Right cardiac atrium (tissue), 5 donors: ENCODE measurements at regions of chr7 and their contacts with region 1.

Region 1: GRCh38 chr7:116984917-116985316 is 31.6 kb downstream of the ST7 start:
- DNase-seq: no peak
- ATAC-seq: peak; percentile 43 to 52
- H3K4me3 ChIP-seq: no peak overlapping the region
- H3K27ac ChIP-seq: no peak overlapping the region
- H3K4me1 ChIP-seq: no peaks in the 10 kb centered on the region
- H3K27me3 ChIP-seq: no peaks in the 10 kb centered on the region

Region 2: DNA sequence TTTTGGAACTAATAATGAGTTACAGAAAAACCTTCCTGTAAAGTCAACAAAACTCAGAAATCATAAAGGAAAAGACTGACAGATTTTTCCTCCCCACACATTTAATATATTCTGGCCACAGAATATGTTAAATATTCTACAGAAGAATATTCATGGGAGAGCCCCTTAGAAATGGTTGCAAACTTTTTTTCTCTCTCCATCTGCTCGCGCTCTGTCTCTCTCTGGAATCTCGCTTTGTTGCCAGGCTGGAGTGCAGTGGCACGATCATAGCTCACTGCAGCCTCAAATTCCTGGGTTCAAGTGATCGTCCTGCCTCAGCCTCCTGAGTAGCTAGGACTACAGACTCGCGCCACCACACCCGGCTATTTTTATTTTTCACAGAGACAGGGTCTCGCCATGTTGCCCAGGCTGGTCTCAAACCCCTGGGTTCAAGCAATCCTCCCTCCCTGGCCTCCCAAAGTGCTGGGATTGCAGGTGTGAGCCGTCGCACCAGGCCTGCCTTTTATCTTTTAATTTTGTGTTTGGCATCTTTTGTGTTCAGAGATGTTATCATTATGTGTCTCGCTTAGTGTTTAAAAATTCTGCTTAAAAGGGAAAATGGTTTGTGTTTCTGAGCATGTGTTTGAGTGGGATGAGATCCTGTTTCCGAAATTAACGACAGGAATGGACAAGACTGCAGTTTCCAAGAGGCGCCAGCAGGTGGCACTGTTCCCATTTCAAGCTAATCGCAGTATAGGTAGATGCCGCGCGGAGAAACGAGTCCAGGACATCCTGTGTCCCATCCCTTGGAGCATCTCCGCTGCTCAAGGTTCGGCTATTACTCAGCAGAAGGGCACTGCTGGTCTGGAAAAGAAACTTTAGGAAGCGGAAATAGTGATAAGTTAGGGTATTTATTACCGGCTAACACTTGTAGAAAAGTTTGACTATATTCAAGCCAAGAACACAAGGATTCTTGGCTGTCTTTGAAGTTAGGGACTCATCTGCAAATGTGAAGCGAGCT is 54.7 kb before region 1 on chr7:
- intact Hi-C with region 1: loop called in 1 of 4 experiments (anchors 10 kb)
- DNase-seq: peak; percentile 82 to 92 (median 89)
- ATAC-seq: peak; percentile 88 to 90
- H3K4me3 ChIP-seq: no peak overlapping the region
- H3K27ac ChIP-seq: no peak overlapping the region
- H3K4me1 ChIP-seq: no peaks in the 10 kb centered on the region
- H3K27me3 ChIP-seq: no peaks in the 10 kb centered on the region

Region 3: GRCh38 chr7:117119192-117119924 is 134.4 kb after region 1 on chr7:
- intact Hi-C with region 1: loop called (anchors 5 to 10 kb)
- DNase-seq: peak; percentile 76 to 91 (median 86)
- ATAC-seq: peak; percentile 51 to 63
- H3K4me3 ChIP-seq: no peak overlapping the region
- H3K27ac ChIP-seq: no peak overlapping the region
- H3K4me1 ChIP-seq: no peaks in the 10 kb centered on the region
- H3K27me3 ChIP-seq: no peaks in the 10 kb centered on the region

Region 4: DNA sequence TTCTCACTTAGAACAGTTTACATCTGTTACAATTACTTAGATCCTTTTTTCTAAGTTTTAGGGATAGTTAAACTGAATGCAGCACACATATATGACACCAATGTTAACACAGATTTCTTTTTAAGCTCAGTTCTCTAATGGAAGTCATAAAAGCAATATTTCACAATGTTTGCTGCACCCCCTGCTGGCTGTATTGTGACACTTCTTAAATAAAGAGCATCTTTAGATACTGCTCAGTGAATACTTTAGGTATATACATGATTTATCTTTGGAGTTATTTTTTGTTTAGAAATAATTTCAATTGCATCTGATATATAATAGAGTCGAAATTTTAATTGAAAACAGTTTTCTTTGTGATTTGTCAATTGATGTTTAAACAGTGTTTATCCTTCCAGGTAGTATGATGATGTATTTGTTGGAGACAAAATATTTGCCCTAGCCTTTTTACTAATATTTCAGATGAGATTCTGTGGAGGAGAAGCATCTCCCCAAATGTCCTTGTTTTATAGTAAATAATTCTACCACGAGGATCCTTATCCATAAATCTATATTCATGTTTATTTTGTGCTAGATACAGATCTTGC is 142.8 kb after region 1 on chr7:
- intact Hi-C with region 1: loop called in 1 of 4 experiments (anchors 10 kb)
- DNase-seq: peak in 2 of 3 donors; percentile 38 to 65
- ATAC-seq: peak; percentile 20 to 38
- H3K4me3 ChIP-seq: no peak overlapping the region
- H3K27ac ChIP-seq: no peak overlapping the region
- H3K4me1 ChIP-seq: no peaks in the 10 kb centered on the region
- H3K27me3 ChIP-seq: no peaks in the 10 kb centered on the region

Region 5: GRCh38 chr7:117193564-117193963 is 208.6 kb after region 1 on chr7:
- intact Hi-C with region 1: no loop called
- DNase-seq: no peak
- ATAC-seq: no peak
- H3K4me3 ChIP-seq: no peak overlapping the region
- H3K27ac ChIP-seq: no peak overlapping the region
- H3K4me1 ChIP-seq: no peaks in the 10 kb centered on the region
- H3K27me3 ChIP-seq: no peaks in the 10 kb centered on the region